ENCODE measurements at regions of chr20 and their contacts with region 1.

Region 1: GRCh38 chr20:32031007-32031958 is 20.8 kb upstream of the HCK start:
- DNase-seq: peak; percentile 68
- ATAC-seq: peak; percentile 75
- H3K4me3 Mint-ChIP-seq: no peak overlapping the region
- H3K27ac Mint-ChIP-seq: no peak overlapping the region
- H3K4me1 Mint-ChIP-seq: peaks cover 2% of the 10 kb centered on the region
- H3K27me3 Mint-ChIP-seq: peaks cover 32% of the 10 kb centered on the region

Region 2: GRCh38 chr20:31822421-31823330 is 208.6 kb before region 1 on chr20:
- CTCF ChIA-PET with region 1: interaction called, 10 read pairs
- POLR2A ChIA-PET with region 1: no interaction called
- DNase-seq: peak; percentile 82
- ATAC-seq: peak; percentile 86
- H3K4me3 Mint-ChIP-seq: no peak overlapping the region
- H3K27ac Mint-ChIP-seq: no peak overlapping the region
- H3K4me1 Mint-ChIP-seq: peaks cover 16% of the 10 kb centered on the region
- H3K27me3 Mint-ChIP-seq: no peaks in the 10 kb centered on the region

Region 3: GRCh38 chr20:32007787-32008616 is 23.3 kb before region 1 on chr20:
- CTCF ChIA-PET with region 1: interaction called, 12 read pairs
- POLR2A ChIA-PET with region 1: no interaction called
- DNase-seq: peak; percentile 25
- ATAC-seq: peak; percentile 27
- H3K4me3 Mint-ChIP-seq: no peak overlapping the region
- H3K27ac Mint-ChIP-seq: no peak overlapping the region
- H3K4me1 Mint-ChIP-seq: peaks cover 13% of the 10 kb centered on the region
- H3K27me3 Mint-ChIP-seq: no peaks in the 10 kb centered on the region

Region 4: GRCh38 chr20:32018269-32019074 is 12.8 kb before region 1 on chr20:
- CTCF ChIA-PET with region 1: interaction called, 34 read pairs
- POLR2A ChIA-PET with region 1: no interaction called
- DNase-seq: peak; percentile 51
- ATAC-seq: peak; percentile 72
- H3K4me3 Mint-ChIP-seq: peak overlapping the region; percentile 70
- H3K27ac Mint-ChIP-seq: no peak overlapping the region
- H3K4me1 Mint-ChIP-seq: peaks cover 19% of the 10 kb centered on the region
- H3K27me3 Mint-ChIP-seq: peaks cover 61% of the 10 kb centered on the region

Region 5: GRCh38 chr20:32091888-32092346 is 60.6 kb after region 1 on chr20:
- CTCF ChIA-PET with region 1: interaction called, 19 read pairs
- POLR2A ChIA-PET with region 1: no interaction called
- DNase-seq: peak; percentile 87
- ATAC-seq: peak; percentile 85
- H3K4me3 Mint-ChIP-seq: no peak overlapping the region
- H3K27ac Mint-ChIP-seq: no peak overlapping the region
- H3K4me1 Mint-ChIP-seq: no peaks in the 10 kb centered on the region
- H3K27me3 Mint-ChIP-seq: peaks cover 19% of the 10 kb centered on the region